ENCODE measurements at regions of chr5 and their contacts with region 1.

Region 1: DNA sequence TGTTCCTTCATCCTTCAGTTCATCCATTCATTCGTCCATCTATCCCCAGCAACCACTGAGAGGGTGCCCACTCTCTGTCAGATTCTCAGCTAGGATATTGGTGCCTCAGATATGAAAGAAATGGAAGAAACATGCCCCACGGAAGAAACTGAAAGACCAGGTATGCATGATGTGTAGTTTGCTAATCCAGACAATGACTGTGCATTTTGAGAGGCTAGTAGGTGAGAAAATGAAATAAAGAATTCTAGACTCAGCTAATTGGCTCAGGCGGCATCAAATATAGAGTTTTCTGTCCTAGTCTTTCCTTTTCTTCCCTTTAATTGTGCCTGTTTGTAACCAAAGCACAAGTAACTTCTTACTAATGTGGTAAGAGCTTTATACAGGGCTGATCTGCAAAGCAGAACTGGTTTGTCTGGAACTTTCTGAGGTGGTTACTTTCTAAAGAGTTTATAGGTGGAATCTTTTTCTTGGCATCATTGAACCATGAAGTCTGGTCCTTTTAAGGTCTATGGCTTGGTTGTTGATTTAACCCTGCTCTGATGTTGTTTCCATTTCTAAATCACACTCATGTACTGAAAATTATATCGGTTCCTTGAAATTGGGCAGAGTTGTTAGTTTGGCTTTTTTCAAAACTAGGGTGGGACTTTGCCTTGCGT is 104.9 kb downstream of the PDZD2 start:
- DNase-seq: no peak
- H3K4me3 ChIP-seq: no peak overlapping the region
- H3K27ac ChIP-seq: no peak overlapping the region
- H3K4me1 ChIP-seq: no peaks in the 10 kb centered on the region
- H3K27me3 ChIP-seq: no peaks in the 10 kb centered on the region
- CTCF ChIP-seq: no peak
- POLR2A ChIP-seq: no peak

Region 2: DNA sequence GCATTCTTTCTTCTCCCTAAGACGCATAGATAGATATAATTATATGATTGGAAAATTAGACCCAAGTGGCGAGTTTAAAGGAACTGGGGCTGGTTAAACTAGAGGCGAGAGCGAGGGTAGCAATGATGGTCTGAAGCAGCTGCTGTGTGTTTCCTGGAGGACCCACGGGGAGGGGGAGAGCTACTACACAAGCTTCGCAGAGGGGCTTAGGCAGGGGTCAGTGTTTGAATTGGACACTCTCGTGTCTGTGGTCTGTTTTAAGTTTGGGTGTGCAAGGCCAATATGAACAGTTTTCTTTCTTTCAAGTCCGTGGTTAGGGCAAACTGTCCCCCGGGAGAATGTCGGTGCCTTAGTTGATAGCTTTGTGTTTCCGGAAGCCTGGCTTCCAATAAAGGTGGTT is 61.8 kb before region 1 on chr5:
- intact Hi-C with region 1: no loop called
- DNase-seq: no peak
- H3K4me3 ChIP-seq: no peak overlapping the region
- H3K27ac ChIP-seq: no peak overlapping the region
- H3K4me1 ChIP-seq: no peaks in the 10 kb centered on the region
- H3K27me3 ChIP-seq: no peaks in the 10 kb centered on the region
- CTCF ChIP-seq: no peak
- POLR2A ChIP-seq: no peak

Region 3: DNA sequence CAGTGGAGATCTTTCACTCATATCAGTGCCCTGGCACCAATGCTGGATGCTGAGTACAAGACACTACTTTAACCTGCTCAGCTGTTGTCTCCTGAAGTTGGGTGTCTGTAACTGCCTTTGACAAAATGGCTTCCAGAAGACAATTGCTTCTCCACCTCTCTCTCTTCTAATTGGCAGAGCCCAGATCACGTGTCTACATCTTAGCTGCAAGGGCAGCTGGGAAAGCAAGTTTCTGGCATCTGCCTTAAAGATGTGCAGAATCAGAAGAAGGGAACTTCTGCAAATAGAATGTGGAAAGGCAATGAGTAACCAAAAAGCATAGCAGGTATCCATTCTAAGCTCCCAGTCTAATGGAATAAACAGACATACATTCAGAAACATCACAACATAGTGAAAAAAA is 23.8 kb before region 1 on chr5:
- intact Hi-C with region 1: loop called (anchors 1 kb)
- DNase-seq: no peak
- H3K4me3 ChIP-seq: no peak overlapping the region
- H3K27ac ChIP-seq: no peak overlapping the region
- H3K4me1 ChIP-seq: no peaks in the 10 kb centered on the region
- H3K27me3 ChIP-seq: no peaks in the 10 kb centered on the region
- CTCF ChIP-seq: no peak
- POLR2A ChIP-seq: no peak